Astrocyte of the cerebellum (primary cell): ENCODE measurements at regions of chr14 and their contacts with region 1.

Region 1: GRCh38 chr14:92356677-92357076 is 33.7 kb downstream of the SLC24A4 start:
- DNase-seq: no peak
- H3K4me3 ChIP-seq: no peak overlapping the region
- CTCF ChIP-seq: no peak

Region 2: DNA sequence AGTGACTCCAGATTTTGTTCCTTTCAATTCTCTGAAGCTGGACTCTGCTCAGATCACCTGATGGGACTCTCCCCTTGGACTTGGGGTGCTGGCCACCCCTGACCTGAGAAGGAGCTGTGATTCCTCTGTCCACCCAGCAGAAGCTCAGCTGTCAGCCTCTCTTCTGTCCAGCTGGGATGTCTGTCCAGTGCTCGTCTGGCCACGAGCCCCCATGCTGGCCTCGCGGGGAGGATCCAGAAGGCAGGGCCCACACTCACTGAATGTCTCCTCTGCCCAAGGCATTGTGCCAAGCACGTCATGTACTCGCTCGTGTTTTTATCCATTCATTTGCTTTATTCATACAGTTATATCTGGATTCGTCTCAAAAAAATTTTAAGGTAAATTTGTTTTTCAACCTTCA is 48.0 kb before region 1 on chr14:
- in situ Hi-C with region 1: loop called (anchors 5 kb)
- DNase-seq: no peak
- H3K4me3 ChIP-seq: no peak overlapping the region
- CTCF ChIP-seq: no peak